Activated CD8-positive, alpha-beta memory T cell treated with anti-CD3 and anti-CD28 coated beads, Interleukin-2, amount 10 ng/mL, durations not matched to agents 7 days and 5 days (primary cell): ENCODE measurements at regions of chr19 and their contacts with region 1.

Region 1: GRCh38 chr19:35451338-35452096 is 3.5 kb downstream of the FFAR2 start:
- DNase-seq: peak; percentile 61
- ATAC-seq: peak; percentile 90
- H3K4me3 Mint-ChIP-seq: peak overlapping the region; percentile 17
- H3K27ac Mint-ChIP-seq: peak overlapping the region; percentile 60
- H3K4me1 Mint-ChIP-seq: peaks cover 52% of the 10 kb centered on the region
- H3K27me3 Mint-ChIP-seq: peaks cover 35% of the 10 kb centered on the region

Region 2: DNA sequence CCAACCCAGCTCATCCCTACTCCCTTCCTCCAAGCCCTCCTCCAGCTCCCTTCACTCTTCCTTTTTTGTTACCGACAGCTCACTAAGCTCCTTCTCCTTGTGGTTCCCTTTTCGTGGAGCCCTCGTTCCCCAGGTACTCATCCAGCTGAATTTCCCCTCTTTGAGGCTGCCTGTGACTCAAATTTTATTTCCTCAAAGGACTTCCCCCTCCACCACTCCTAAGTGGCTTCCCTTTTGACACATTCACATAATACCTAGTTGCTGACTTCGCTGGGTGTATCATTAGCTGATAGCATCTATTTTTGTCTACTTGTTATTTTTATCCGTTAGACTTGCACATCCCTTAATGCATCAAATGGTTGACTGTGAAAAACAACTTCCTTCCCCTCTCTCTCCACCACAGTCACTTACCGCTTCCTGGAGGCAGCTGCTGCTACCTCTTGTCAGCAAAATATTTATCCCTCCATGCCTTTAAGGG is 11.0 kb after region 1 on chr19:
- CTCF ChIA-PET with region 1: interaction called, 11 read pairs
- DNase-seq: peak; percentile 86
- ATAC-seq: peak; percentile 95
- H3K4me3 Mint-ChIP-seq: peak overlapping the region; percentile 55
- H3K27ac Mint-ChIP-seq: peak overlapping the region; percentile 91
- H3K4me1 Mint-ChIP-seq: peaks cover 35% of the 10 kb centered on the region
- H3K27me3 Mint-ChIP-seq: peaks cover 3% of the 10 kb centered on the region